Posterior vena cava (tissue), 2 donors: ENCODE measurements at regions of chr21 and their contacts with region 1.

Region 1: DNA sequence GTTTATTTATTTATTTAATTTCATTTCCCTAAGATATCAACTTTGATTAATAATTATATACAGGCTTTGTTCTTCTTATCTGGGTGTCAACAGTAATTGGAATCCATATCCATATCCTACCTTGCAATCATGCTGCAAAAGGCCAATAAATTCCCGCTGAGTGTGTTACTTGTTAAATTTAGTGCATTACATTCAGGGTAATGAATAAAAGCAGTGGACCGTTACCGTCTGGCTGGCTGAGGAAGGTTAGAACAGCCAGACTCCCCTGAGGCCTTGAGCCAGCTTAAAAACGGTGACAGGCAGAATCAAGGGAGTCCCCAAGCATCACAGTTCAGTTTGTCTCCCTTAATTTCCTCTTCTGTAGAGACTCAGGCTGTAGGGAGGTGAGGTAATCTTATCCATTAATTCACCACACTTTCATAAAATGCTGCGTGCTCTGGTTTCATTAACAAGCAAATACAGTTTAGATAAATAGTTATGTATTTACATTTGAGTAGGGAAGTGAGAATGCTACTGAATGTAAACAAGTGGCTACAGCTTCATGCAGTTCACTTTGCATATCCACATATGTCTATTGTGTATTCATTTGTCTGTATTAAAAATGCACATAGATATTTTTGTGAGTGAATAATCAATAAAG is 888.2 kb upstream of the CXADR start:
- DNase-seq: no peak

Region 2: DNA sequence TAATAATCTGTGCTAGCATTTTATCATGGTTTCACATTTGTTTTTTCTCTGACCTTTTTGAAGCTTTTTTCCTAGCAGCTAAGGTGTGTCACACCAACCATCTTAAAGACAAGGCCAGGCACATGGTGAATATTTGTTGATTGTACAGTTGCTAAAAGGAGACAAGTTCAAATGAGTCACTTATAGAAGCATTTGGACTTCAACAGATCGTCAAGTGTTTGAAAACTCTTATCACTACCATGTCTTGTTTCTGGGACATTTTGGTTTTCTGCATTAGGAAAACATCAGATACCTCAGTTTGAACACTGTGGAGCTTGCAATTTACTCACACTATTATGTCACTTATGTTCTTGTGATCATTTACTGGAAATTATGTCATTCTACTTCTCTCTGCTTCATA is 487.5 kb before region 1 on chr21:
- intact Hi-C with region 1: loop called in 1 of 2 experiments (anchors 5 kb)
- DNase-seq: no peak

Region 3: GRCh38 chr21:16695074-16695473 is 70.5 kb after region 1 on chr21:
- intact Hi-C with region 1: no loop called
- DNase-seq: no peak